ENCODE measurements at regions of chr1 and their contacts with region 1.

Region 1: GRCh38 chr1:218361298-218362065 is 16.3 kb downstream of the TGFB2 start:
- DNase-seq: peak; percentile 31
- ATAC-seq: peak; percentile 75
- H3K4me3 ChIP-seq: no peak overlapping the region
- H3K27ac ChIP-seq: no peak overlapping the region
- H3K4me1 ChIP-seq: no peaks in the 10 kb centered on the region; a peak in 1 of 4 replicates
- H3K27me3 ChIP-seq: no peaks in the 10 kb centered on the region
- CTCF ChIP-seq: peak; percentile 47 to 72 (median 53); a peak in 5 of 6 replicates
- POLR2A ChIP-seq: no peak
- RAD21 ChIP-seq: peak; percentile 82

Region 2: DNA sequence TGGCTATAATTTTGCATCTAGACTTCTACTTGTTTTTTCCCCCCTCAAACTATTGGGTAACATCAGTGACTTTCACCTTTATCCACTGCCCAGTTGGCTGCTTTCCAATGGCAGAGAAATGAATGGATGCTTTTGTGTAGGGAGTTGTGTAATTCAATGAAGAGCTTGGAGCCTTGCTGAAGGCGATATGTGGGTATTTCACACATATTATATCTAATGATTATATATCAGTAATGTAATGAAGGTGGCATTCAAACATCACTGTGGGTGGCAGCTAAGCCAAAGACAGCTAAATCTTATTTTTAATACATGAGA is 64.8 kb after region 1 on chr1:
- CTCF ChIA-PET with region 1: no interaction called
- POLR2A ChIA-PET with region 1: no interaction called
- RAD21 ChIA-PET with region 1: no interaction called
- intact Hi-C with region 1: no loop called
- DNase-seq: no peak
- ATAC-seq: no peak
- H3K4me3 ChIP-seq: no peak overlapping the region
- H3K27ac ChIP-seq: no peak overlapping the region
- H3K4me1 ChIP-seq: peaks cover 0 to 6% of the 10 kb centered on the region in 2 experiments; a peak in 1 of 4 replicates
- H3K27me3 ChIP-seq: no peaks in the 10 kb centered on the region
- CTCF ChIP-seq: no peak
- POLR2A ChIP-seq: no peak
- RAD21 ChIP-seq: no peak

Region 3: GRCh38 chr1:218521375-218522169 is 160.1 kb after region 1 on chr1:
- CTCF ChIA-PET with region 1: interaction called, 3 read pairs
- POLR2A ChIA-PET with region 1: no interaction called
- RAD21 ChIA-PET with region 1: no interaction called
- intact Hi-C with region 1: loop called (anchors 2 kb)
- DNase-seq: peak; percentile 41
- ATAC-seq: peak; percentile 74
- H3K4me3 ChIP-seq: no peak overlapping the region
- H3K27ac ChIP-seq: no peak overlapping the region
- H3K4me1 ChIP-seq: no peaks in the 10 kb centered on the region
- H3K27me3 ChIP-seq: no peaks in the 10 kb centered on the region
- CTCF ChIP-seq: peak; percentile 51 to 93 (median 76)
- POLR2A ChIP-seq: no peak
- RAD21 ChIP-seq: peak; percentile 81

Region 4: DNA sequence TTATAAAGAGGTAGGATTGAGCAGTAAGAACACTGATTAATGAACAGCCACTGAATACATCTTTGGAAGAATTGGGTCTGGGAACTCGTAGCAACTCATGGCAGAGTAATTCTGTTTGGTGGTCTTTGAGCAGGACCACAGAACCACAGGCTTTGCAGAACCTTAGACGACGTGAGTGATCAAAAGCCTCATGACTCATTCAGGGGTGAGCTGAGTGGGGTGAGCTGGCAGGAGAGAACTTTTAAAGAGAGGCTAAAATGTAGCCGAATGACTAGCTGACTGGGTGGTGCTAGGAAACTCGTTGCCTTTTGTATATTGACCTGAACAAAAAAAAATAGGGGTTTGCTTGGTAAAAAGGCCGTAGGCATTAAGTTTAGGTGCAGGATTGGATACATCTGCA is 297.4 kb after region 1 on chr1:
- CTCF ChIA-PET with region 1: no interaction called
- POLR2A ChIA-PET with region 1: no interaction called
- RAD21 ChIA-PET with region 1: no interaction called
- intact Hi-C with region 1: loop called (anchors 5 kb)
- DNase-seq: no peak
- ATAC-seq: peak; percentile 75
- H3K4me3 ChIP-seq: peak overlapping the region in 1 of 2 experiments; percentile 19; a peak in 3 of 4 replicates
- H3K27ac ChIP-seq: peak overlapping the region; percentile 88; the same call in 1 of the 2 replicates
- H3K4me1 ChIP-seq: peaks cover 35 to 78% of the 10 kb centered on the region in 2 experiments
- H3K27me3 ChIP-seq: no peaks in the 10 kb centered on the region
- CTCF ChIP-seq: no peak
- POLR2A ChIP-seq: no peak
- RAD21 ChIP-seq: no peak

Region 5: DNA sequence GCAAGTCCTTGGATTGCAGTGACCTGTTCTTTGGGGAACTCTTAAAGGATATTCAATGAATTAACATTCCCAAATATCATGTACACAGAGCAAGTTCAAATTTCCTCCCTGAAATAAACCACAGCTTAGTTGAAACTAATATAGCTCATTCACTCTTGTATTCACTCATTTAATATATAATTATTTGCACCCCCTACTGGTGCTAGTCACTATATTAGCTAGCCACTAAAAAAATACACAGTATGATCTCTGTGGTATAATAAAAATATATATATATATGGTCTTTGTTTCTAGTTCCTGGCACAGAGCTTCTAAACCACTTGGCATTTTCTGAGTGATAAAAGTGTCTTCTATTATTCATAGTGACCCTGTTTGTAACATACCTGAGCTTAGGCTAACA is 634.9 kb after region 1 on chr1:
- CTCF ChIA-PET with region 1: no interaction called
- POLR2A ChIA-PET with region 1: no interaction called
- RAD21 ChIA-PET with region 1: no interaction called
- intact Hi-C with region 1: loop called (anchors 10 kb)
- DNase-seq: no peak
- ATAC-seq: peak; percentile 69
- H3K4me3 ChIP-seq: no peak overlapping the region
- H3K27ac ChIP-seq: no peak overlapping the region
- H3K4me1 ChIP-seq: no peaks in the 10 kb centered on the region
- H3K27me3 ChIP-seq: no peaks in the 10 kb centered on the region
- CTCF ChIP-seq: 0 out of 6 replicates have a peak, but pooled peaks of 1 of the 3 experiments have one; percentile 31
- POLR2A ChIP-seq: no peak
- RAD21 ChIP-seq: no peak

Measured in HCT116 (cell line).